ENCODE measurements at regions of chr9 and their contacts with region 1.

Region 1: DNA sequence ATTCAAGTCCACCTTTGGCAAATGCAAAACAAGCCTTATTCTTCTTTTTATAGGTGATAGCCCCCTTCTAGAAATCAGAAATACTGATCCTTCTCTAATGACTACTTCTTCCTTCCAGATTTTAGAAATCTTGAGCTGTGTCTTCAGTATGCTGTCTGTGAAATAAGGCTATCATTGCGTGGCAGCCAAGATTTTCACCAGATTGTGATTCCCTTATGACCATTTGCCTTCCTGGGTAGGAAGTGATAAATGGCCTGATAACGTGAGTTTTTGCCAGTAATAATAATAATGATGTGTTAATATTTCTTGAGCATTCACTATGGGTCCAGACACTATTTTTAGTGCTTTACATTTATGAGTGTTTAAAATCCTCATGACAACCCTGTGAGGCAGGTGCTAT is 80.9 kb downstream of the PIP5K1B start:
- DNase-seq: no peak
- H3K4me3 ChIP-seq: no peak overlapping the region
- H3K27ac ChIP-seq: no peak overlapping the region
- H3K4me1 ChIP-seq: peaks cover 7% of the 10 kb centered on the region
- H3K27me3 ChIP-seq: no peaks in the 10 kb centered on the region
- CTCF ChIP-seq: no peak

Region 2: GRCh38 chr9:68685770-68686169 is 100.2 kb before region 1 on chr9:
- CTCF ChIA-PET with region 1: no interaction called
- dilution Hi-C with region 1: no loop called
- in situ Hi-C with region 1: no loop called
- intact Hi-C with region 1: no loop called
- DNase-seq: no peak
- H3K4me3 ChIP-seq: no peak overlapping the region
- H3K27ac ChIP-seq: no peak overlapping the region
- H3K4me1 ChIP-seq: no peaks in the 10 kb centered on the region
- H3K27me3 ChIP-seq: no peaks in the 10 kb centered on the region
- CTCF ChIP-seq: peak; percentile 17 to 31

Region 3: GRCh38 chr9:68739621-68740174 is 46.3 kb before region 1 on chr9:
- CTCF ChIA-PET with region 1: no interaction called
- dilution Hi-C with region 1: no loop called
- in situ Hi-C with region 1: no loop called
- intact Hi-C with region 1: loop called (anchors 5 kb)
- DNase-seq: no peak
- H3K4me3 ChIP-seq: no peak overlapping the region
- H3K27ac ChIP-seq: no peak overlapping the region
- H3K4me1 ChIP-seq: no peaks in the 10 kb centered on the region
- H3K27me3 ChIP-seq: no peaks in the 10 kb centered on the region
- CTCF ChIP-seq: no peak